A549 (cell line): ENCODE measurements at regions of chr13 and their contacts with region 1.

Region 1: DNA sequence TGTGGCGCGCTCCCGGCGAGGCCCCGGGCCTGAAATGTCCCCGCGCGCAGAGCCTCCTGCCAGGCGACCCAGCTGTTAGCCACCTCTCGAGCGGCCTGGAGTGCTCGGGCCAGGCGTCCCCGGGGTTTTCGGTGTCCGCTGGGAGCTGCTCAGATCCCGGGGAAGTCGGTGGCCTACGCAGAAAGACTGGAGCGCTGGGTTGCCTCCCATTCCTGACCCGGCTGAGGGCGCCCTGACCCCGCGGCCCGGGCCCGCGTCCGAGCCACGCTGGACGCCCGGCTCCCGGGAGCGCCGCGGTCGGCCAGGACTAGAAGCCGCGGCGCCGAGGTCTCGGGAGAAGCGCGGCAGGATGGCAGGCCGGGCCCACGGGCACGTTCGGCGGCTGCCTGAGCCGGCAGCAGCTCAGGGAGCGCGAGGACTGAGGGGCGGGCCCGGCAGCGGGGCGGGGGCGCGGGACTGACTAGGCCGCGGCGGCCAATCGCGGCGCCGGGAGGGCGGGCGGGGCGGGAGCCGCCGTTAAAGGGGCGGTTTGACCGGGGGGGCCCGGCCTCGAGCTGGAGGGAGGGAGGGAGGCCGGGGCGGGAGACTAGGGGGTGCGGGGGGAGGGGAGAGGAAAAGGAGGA is 1.3 kb upstream of the ZIC2 start:
- DNase-seq: peak in 1 of 2 experiments; percentile 87
- ATAC-seq: peak; percentile 54 to 77
- H3K4me3 ChIP-seq: peak overlapping the region; percentile 92
- H3K27ac ChIP-seq: peak overlapping the region; percentile 84 to 97
- H3K4me1 ChIP-seq: peaks cover 7% of the 10 kb centered on the region; the same call in 2 of the 3 replicates
- CTCF ChIP-seq: no peak
- EP300 ChIP-seq: no peak
- POLR2A ChIP-seq: peak; percentile 41
- RAD21 ChIP-seq: no peak

Region 2: GRCh38 chr13:99686157-99686572 is 294.1 kb before region 1 on chr13:
- CTCF ChIA-PET with region 1: no interaction called
- POLR2A ChIA-PET with region 1: no interaction called
- DNase-seq: peak in 1 of 2 experiments; percentile 9
- ATAC-seq: peak; percentile 59 to 62; a peak in 4 of 6 replicates
- H3K4me3 ChIP-seq: no peak overlapping the region
- H3K27ac ChIP-seq: peak overlapping the region in 1 of 2 experiments; percentile 35; a peak in 1 of 6 replicates
- H3K4me1 ChIP-seq: peaks cover 5% of the 10 kb centered on the region; the same call in 1 of the 3 replicates
- CTCF ChIP-seq: no peak
- EP300 ChIP-seq: no peak
- POLR2A ChIP-seq: no peak
- RAD21 ChIP-seq: no peak

Region 3: DNA sequence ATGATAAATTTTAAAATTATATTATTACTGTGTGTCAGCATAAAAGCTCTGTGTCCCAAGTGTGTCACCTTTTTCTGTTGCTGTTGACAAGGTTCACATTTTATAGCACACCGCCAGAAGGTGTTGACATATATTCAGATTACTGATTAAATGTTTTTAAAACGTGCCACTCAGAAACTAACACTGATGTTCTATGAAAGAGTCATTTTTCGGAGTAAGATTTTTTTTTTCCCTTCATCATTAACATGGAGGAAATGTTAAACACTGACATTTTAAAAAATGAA is 281.6 kb before region 1 on chr13:
- CTCF ChIA-PET with region 1: no interaction called
- POLR2A ChIA-PET with region 1: no interaction called
- DNase-seq: no peak
- ATAC-seq: no peak
- H3K4me3 ChIP-seq: no peak overlapping the region
- H3K27ac ChIP-seq: no peak overlapping the region
- H3K4me1 ChIP-seq: no peaks in the 10 kb centered on the region
- CTCF ChIP-seq: no peak
- EP300 ChIP-seq: no peak
- POLR2A ChIP-seq: no peak
- RAD21 ChIP-seq: no peak

Region 4: GRCh38 chr13:99969919-99970621 is 10.2 kb before region 1 on chr13:
- CTCF ChIA-PET with region 1: interaction called, 4 read pairs
- POLR2A ChIA-PET with region 1: interaction called, 79 read pairs
- DNase-seq: peak in 1 of 2 experiments; percentile 83
- ATAC-seq: peak; percentile 27 to 62
- H3K4me3 ChIP-seq: peak overlapping the region; percentile 95
- H3K27ac ChIP-seq: peak overlapping the region; percentile 98 to 100
- H3K4me1 ChIP-seq: peaks cover 13% of the 10 kb centered on the region; the same call in 2 of the 3 replicates
- CTCF ChIP-seq: no peak
- EP300 ChIP-seq: no peak
- POLR2A ChIP-seq: peak; percentile 30
- RAD21 ChIP-seq: no peak

Region 5: DNA sequence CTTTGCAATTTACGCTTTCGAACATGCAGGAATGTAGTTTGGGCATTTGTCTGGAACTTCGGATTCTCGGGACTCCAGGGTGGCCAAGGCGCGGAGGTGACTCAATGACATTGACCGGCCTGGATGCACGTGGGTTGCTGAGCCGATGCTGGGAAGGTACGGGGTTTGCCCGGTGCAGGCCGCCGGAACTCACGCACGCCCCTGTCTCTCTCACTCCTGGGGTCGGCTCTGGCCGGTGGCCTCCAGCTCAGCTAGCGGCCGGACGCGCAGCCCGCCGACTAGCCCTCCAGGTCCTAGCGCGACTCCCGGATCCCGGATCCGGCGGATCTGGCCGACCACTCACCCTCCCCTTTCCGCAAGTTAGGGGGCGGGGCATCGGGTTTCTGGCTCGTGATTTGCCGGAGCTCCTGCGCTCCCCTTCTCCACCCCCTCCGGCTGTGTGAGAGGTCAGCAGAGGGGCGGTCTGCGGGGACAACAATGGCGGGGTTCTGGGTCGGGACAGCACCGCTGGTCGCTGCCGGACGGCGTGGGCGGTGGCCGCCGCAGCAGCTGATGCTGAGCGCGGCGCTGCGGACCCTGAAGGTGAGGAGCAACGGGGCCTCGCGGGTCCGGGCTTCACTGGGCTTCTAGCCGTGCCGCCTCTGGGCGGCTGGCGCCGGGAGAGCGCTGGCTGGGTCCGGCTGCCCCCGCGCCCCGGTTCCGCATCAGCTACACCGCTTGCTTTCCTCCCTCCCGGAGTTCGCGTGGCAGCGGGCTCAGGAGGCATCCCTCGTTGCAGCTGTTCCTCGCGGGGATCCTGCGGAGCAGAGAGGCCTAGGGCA is 108.5 kb after region 1 on chr13 and contains the start of gene PCCA:
- CTCF ChIA-PET with region 1: no interaction called
- POLR2A ChIA-PET with region 1: interaction called, 15 read pairs
- DNase-seq: peak; percentile 84 to 92
- ATAC-seq: peak; percentile 97 to 98
- H3K4me3 ChIP-seq: peak within 1 kb of the TSS; percentile 95
- H3K27ac ChIP-seq: peak within 1 kb of the TSS; percentile 74 to 92
- H3K4me1 ChIP-seq: peaks cover 17% of the 10 kb centered on the region; the same call in 2 of the 3 replicates
- CTCF ChIP-seq: no peak
- EP300 ChIP-seq: no peak
- POLR2A ChIP-seq: peak; percentile 74
- RAD21 ChIP-seq: no peak
- polyA plus RNA-seq, gene PCCA: 13.2 and 16.3 TPM in 2 replicates